ENCODE measurements at regions of chr1 and their contacts with region 1.

Region 1: GRCh38 chr1:98104289-98104688 is 183.5 kb upstream of the DPYD start:
- DNase-seq: no peak
- H3K4me3 ChIP-seq: no peak overlapping the region
- H3K27ac ChIP-seq: no peak overlapping the region
- H3K4me1 ChIP-seq: no peaks in the 10 kb centered on the region
- H3K27me3 ChIP-seq: no peaks in the 10 kb centered on the region
- CTCF ChIP-seq: no peak
- POLR2A ChIP-seq: no peak

Region 2: GRCh38 chr1:97097466-97097865 is 1006.8 kb before region 1 on chr1:
- intact Hi-C with region 1: no loop called
- DNase-seq: no peak
- H3K4me3 ChIP-seq: no peak overlapping the region
- H3K27ac ChIP-seq: no peak overlapping the region
- H3K4me1 ChIP-seq: no peaks in the 10 kb centered on the region
- H3K27me3 ChIP-seq: no peaks in the 10 kb centered on the region
- CTCF ChIP-seq: no peak
- POLR2A ChIP-seq: no peak

Region 3: DNA sequence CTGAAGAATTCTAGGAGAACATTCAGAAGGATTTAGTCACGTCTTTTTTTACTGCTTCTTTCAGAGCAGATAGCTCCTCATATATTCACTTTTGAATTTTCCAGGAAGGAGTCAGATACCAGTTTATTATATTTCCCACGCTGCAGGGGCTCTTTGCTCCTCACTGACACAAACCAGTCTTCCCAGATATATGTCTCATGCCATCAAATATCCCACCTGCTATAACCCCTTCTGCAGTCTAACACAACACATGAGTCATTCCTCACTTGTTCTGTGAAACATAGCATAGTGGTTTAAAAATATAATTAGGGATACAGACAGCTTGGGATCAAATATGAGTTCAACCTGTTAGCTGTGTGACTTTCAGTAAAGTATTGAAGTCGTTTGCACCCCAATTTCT is 68.3 kb after region 1 on chr1:
- intact Hi-C with region 1: loop called (anchors 2 kb)
- DNase-seq: no peak
- H3K4me3 ChIP-seq: no peak overlapping the region
- H3K27ac ChIP-seq: no peak overlapping the region
- H3K4me1 ChIP-seq: no peaks in the 10 kb centered on the region
- H3K27me3 ChIP-seq: no peaks in the 10 kb centered on the region
- CTCF ChIP-seq: no peak
- POLR2A ChIP-seq: no peak

Measured in breast epithelium (tissue), 4 donors.